A549 (cell line): ENCODE measurements at regions of chr9 and their contacts with region 1.

Region 1: GRCh38 chr9:96217754-96218693 is 84.0 kb downstream of the HSD17B3 start:
- DNase-seq: peak; percentile 74 to 85
- ATAC-seq: peak; percentile 90 to 97
- H3K4me3 ChIP-seq: 0 out of 3 replicates have a peak overlapping the region, but pooled peaks have one; percentile 7
- H3K27ac ChIP-seq: peak overlapping the region; percentile 70 to 89
- H3K4me1 ChIP-seq: peaks cover 10% of the 10 kb centered on the region
- CTCF ChIP-seq: peak; percentile 97
- EP300 ChIP-seq: no peak
- POLR2A ChIP-seq: no peak
- RAD21 ChIP-seq: peak; percentile 87 to 100

Region 2: DNA sequence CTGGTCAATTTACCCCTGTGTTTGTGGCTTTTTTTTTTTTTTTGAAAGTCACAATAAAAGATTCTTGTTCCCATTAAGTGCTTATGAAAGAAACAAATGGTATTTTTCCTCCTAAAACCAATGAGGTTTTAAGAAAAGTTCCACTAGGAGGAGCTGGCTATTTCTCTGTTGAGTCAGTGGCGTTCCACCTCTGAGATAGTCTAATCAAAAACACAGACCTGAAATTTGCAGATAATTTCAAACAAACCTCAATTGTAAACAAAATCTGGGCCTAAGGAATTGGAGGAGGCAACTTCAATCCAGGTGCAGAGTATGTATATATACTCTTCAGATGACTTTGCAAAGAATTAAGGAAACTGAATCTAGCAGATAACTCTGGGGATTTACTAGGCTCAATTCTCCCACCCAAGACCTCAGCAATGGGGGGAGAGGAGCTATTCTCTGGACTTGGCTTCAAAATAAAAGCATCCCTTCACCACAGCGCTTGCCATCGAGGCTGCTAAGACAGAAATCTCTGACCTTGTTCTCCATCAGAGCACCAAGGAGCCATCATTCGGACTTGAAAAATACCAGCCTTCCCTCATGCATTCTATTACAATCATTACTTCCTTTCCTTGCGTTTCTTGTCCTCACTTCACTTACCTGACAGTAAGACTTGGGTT is 952.9 kb before region 1 on chr9:
- CTCF ChIA-PET with region 1: interaction called, 11 read pairs
- POLR2A ChIA-PET with region 1: no interaction called
- DNase-seq: peak in 1 of 2 experiments; percentile 31
- ATAC-seq: peak in 1 of 2 experiments; percentile 54; a peak in 2 of 6 replicates
- H3K4me3 ChIP-seq: no peak overlapping the region
- H3K27ac ChIP-seq: no peak overlapping the region
- H3K4me1 ChIP-seq: peaks cover 44% of the 10 kb centered on the region
- CTCF ChIP-seq: peak; percentile 58
- EP300 ChIP-seq: no peak
- POLR2A ChIP-seq: no peak
- RAD21 ChIP-seq: peak; percentile 65 to 68

Region 3: DNA sequence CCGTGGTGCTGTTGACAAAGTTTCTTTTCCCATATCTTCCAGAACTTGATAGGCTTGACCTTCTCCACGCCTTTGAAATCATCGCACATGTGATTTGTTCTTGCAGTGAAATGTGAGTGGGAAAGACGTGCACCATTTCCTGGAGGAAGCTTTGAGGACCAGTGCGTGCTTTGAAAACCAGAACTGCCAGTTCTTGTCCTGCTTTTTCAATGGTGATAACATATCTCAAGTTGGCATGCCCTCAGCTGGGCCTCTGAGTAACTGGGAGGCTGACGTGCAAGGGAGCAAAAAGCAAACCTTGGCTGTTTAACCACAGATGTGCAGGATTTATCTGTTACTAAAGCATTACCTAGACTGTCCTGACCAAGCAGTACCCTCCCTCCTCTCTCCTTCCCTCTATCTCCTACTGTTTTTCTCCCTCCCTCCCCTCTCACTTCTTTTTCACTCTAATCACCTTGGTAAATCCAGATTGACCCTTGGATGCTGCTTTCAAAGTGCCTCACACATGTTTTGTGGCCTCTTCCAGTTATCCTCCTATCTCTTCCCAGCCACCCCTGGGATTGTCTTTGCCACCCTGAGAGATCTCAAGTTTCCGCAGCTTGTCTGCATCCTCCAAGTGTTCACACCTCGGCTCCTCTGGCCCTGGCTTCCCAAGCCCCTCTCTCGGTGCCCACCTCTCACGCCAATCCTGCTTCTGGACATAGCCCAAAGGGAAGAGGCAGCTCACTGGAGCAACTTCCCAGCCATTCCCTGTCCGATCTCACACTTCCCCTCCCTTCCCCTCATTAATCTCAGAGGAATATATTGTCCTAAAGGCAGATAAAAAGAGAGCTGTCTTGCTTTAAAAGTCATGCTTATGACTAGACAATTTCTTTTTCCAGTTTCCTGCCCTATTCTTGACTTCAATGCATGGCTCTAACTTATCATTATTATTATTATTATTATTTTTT is 144.2 kb before region 1 on chr9:
- CTCF ChIA-PET with region 1: interaction called, 10 read pairs
- POLR2A ChIA-PET with region 1: no interaction called
- DNase-seq: no peak
- ATAC-seq: no peak
- H3K4me3 ChIP-seq: no peak overlapping the region
- H3K27ac ChIP-seq: no peak overlapping the region
- H3K4me1 ChIP-seq: peaks cover 3% of the 10 kb centered on the region; the same call in 1 of the 3 replicates
- CTCF ChIP-seq: no peak
- EP300 ChIP-seq: no peak
- POLR2A ChIP-seq: no peak
- RAD21 ChIP-seq: no peak

Region 4: DNA sequence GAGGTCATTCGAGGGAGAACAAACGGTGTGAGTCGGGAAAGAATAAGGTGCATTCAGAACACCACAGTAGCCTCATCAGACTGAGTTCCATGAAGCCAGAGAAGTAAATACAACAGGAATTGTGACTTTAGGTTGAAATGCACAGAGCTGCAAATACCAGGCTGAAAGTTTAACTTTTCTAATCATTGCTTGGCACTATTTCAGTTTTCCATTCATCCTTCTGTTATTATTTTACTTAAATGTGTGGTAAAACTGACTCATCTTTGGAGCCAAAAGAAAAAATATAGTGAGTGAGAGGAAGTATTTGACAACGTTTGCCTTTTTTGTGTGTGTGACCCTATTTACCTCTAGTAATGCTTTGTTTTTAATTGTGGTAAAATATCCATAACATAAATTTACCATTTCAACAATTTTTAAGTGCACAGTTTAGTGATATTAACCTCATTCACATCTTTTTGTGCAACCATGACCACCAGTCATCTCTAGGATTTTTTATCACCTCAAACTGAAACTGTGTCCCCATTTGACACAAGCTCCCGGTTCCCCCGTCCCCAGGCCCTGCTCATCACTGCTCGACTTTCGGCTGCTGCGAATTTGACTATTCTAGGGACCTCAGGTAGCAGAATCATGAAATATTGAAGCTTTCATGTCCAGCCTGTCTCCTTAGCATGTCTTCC is 82.8 kb before region 1 on chr9:
- CTCF ChIA-PET with region 1: no interaction called
- POLR2A ChIA-PET with region 1: no interaction called
- DNase-seq: no peak
- ATAC-seq: no peak
- H3K4me3 ChIP-seq: no peak overlapping the region
- H3K27ac ChIP-seq: peak overlapping the region in 1 of 2 experiments; percentile 2; a peak in 1 of 6 replicates
- H3K4me1 ChIP-seq: peaks cover 37% of the 10 kb centered on the region
- CTCF ChIP-seq: no peak
- EP300 ChIP-seq: no peak
- POLR2A ChIP-seq: no peak
- RAD21 ChIP-seq: no peak

Region 5: GRCh38 chr9:96199006-96199405 is 19.0 kb before region 1 on chr9:
- CTCF ChIA-PET with region 1: interaction called, 11 read pairs
- POLR2A ChIA-PET with region 1: no interaction called
- DNase-seq: no peak
- ATAC-seq: no peak
- H3K4me3 ChIP-seq: no peak overlapping the region
- H3K27ac ChIP-seq: peak overlapping the region in 1 of 2 experiments; percentile 21; a peak in 1 of 6 replicates
- H3K4me1 ChIP-seq: no peaks in the 10 kb centered on the region
- CTCF ChIP-seq: no peak
- EP300 ChIP-seq: no peak
- POLR2A ChIP-seq: no peak
- RAD21 ChIP-seq: no peak

Region 6: DNA sequence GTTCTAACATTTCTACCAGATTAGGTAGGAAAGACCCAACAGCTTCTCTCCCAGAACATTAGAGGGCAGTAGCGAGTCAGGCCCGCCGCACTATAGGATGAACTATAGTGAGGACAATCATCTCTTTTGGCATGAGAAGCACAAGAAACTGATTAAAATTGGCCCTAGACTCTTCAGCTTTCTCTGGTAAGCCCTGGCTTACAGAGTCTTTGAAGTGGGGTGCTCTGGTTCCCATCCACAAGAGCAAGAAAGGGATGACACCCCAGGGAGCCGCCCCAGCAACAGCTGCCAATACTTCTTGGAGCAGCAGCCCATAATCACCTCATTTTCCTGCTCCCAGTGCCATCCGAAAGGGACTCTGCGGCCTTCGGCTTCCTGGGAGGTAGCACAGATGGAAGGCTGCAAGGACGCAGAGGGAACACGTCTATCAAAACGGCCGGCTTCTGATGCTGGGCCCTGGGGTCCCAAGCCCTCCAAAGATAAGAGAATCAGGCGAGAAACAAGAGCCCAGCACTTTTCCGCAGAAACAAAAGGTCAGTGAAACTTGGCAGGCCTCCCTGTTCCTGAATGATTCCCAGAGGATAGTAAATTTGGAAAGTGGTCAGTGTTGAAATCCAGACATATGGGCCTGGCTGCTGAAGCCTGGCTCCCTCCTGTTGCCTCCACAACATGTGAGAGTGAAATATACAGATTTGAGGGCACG is 14.7 kb after region 1 on chr9:
- CTCF ChIA-PET with region 1: interaction called, 21 read pairs
- POLR2A ChIA-PET with region 1: no interaction called
- DNase-seq: peak; percentile 57 to 69
- ATAC-seq: peak; percentile 84 to 94
- H3K4me3 ChIP-seq: no peak overlapping the region
- H3K27ac ChIP-seq: no peak overlapping the region
- H3K4me1 ChIP-seq: no peaks in the 10 kb centered on the region
- CTCF ChIP-seq: peak; percentile 72
- EP300 ChIP-seq: no peak
- POLR2A ChIP-seq: no peak
- RAD21 ChIP-seq: peak; percentile 59 to 77